Activated CD4-positive, alpha-beta T cell treated with anti-CD3 and anti-CD28 coated beads for 36 hours (primary cell): ENCODE measurements at regions of chr15 and their contacts with region 1.

Region 1: GRCh38 chr15:64809649-64810496 is 15.6 kb downstream of the PIF1 start:
- DNase-seq: peak; percentile 86
- ATAC-seq: peak; percentile 86
- H3K4me3 Mint-ChIP-seq: no peak overlapping the region
- H3K27ac Mint-ChIP-seq: no peak overlapping the region
- H3K4me1 Mint-ChIP-seq: no peaks in the 10 kb centered on the region
- H3K27me3 Mint-ChIP-seq: peaks cover 3% of the 10 kb centered on the region

Region 2: GRCh38 chr15:64478863-64479262 is 331.0 kb before region 1 on chr15:
- CTCF ChIA-PET with region 1: no interaction called
- POLR2A ChIA-PET with region 1: no interaction called
- intact Hi-C with region 1: no loop called
- DNase-seq: no peak
- ATAC-seq: no peak
- H3K4me3 Mint-ChIP-seq: no peak overlapping the region
- H3K27ac Mint-ChIP-seq: no peak overlapping the region
- H3K4me1 Mint-ChIP-seq: peaks cover 32% of the 10 kb centered on the region
- H3K27me3 Mint-ChIP-seq: no peaks in the 10 kb centered on the region

Region 3: GRCh38 chr15:64681424-64682024 is 128.3 kb before region 1 on chr15:
- CTCF ChIA-PET with region 1: interaction called, 14 read pairs
- POLR2A ChIA-PET with region 1: no interaction called
- intact Hi-C with region 1: loop called in 1 of 2 experiments (anchors 2 kb)
- DNase-seq: peak; percentile 16
- ATAC-seq: peak; percentile 60
- H3K4me3 Mint-ChIP-seq: no peak overlapping the region
- H3K27ac Mint-ChIP-seq: no peak overlapping the region
- H3K4me1 Mint-ChIP-seq: no peaks in the 10 kb centered on the region
- H3K27me3 Mint-ChIP-seq: no peaks in the 10 kb centered on the region

Region 4: GRCh38 chr15:64783796-64784195 is 26.1 kb before region 1 on chr15:
- CTCF ChIA-PET with region 1: interaction called, 18 read pairs
- POLR2A ChIA-PET with region 1: no interaction called
- intact Hi-C with region 1: no loop called
- DNase-seq: no peak
- ATAC-seq: no peak
- H3K4me3 Mint-ChIP-seq: no peak overlapping the region
- H3K27ac Mint-ChIP-seq: no peak overlapping the region
- H3K4me1 Mint-ChIP-seq: peaks cover 4% of the 10 kb centered on the region
- H3K27me3 Mint-ChIP-seq: no peaks in the 10 kb centered on the region

Region 5: GRCh38 chr15:64836023-64836536 is 26.2 kb after region 1 on chr15:
- CTCF ChIA-PET with region 1: interaction called, 11 read pairs
- POLR2A ChIA-PET with region 1: no interaction called
- intact Hi-C with region 1: no loop called
- DNase-seq: no peak
- ATAC-seq: peak; percentile 4
- H3K4me3 Mint-ChIP-seq: peak overlapping the region; percentile 56
- H3K27ac Mint-ChIP-seq: peak overlapping the region; percentile 30
- H3K4me1 Mint-ChIP-seq: peaks cover 43% of the 10 kb centered on the region
- H3K27me3 Mint-ChIP-seq: no peaks in the 10 kb centered on the region

Region 6: DNA sequence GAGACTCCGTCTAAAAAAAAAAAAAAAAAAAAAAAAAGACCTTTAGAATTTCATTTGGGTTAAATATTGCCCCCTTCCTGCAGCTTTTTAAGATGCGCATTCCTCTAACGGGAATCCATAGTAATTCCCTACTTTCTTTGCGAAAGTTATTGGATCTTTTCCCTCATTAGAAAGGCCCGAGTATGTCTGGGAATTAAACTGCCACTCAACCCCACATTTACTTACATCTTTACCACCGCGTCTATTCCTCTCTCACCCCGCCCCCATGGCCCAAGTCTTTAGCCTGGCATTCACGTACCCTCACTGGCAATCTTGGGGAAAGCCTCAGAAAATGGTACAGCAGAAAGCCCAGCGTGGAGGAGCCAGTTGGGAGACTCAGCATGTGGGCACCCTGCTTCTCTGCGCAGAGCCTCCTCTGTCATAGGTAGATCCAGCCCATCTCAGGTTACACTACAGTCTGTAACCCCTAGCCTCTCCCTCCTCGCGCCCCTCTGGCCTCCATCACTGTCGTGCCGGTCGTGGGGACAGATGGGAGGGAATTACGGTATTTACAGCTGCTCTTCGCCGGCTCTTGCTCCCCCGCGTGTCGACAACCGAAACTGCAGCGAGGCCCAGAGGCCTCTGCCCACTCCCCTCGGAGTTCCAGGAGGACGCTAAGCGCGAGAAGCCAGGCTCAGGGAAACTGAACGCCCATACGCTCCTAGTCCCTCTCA is 95.4 kb after region 1 on chr15:
- CTCF ChIA-PET with region 1: interaction called, 12 read pairs
- POLR2A ChIA-PET with region 1: no interaction called
- intact Hi-C with region 1: loop called in 1 of 2 experiments (anchors 1 kb)
- DNase-seq: peak; percentile 91
- ATAC-seq: peak; percentile 87
- H3K4me3 Mint-ChIP-seq: peak overlapping the region; percentile 67
- H3K27ac Mint-ChIP-seq: peak overlapping the region; percentile 87
- H3K4me1 Mint-ChIP-seq: peaks cover 34% of the 10 kb centered on the region
- H3K27me3 Mint-ChIP-seq: peaks cover 6% of the 10 kb centered on the region

Region 7: GRCh38 chr15:64950888-64951287 is 141.0 kb after region 1 on chr15:
- CTCF ChIA-PET with region 1: no interaction called
- POLR2A ChIA-PET with region 1: no interaction called
- intact Hi-C with region 1: no loop called
- DNase-seq: no peak
- ATAC-seq: no peak
- H3K4me3 Mint-ChIP-seq: no peak overlapping the region
- H3K27ac Mint-ChIP-seq: peak overlapping the region; percentile 1
- H3K4me1 Mint-ChIP-seq: peaks cover 1% of the 10 kb centered on the region
- H3K27me3 Mint-ChIP-seq: no peaks in the 10 kb centered on the region

Region 8: GRCh38 chr15:64961013-64961412 is 151.1 kb after region 1 on chr15:
- CTCF ChIA-PET with region 1: no interaction called
- POLR2A ChIA-PET with region 1: no interaction called
- intact Hi-C with region 1: no loop called
- DNase-seq: no peak
- ATAC-seq: no peak
- H3K4me3 Mint-ChIP-seq: no peak overlapping the region
- H3K27ac Mint-ChIP-seq: no peak overlapping the region
- H3K4me1 Mint-ChIP-seq: no peaks in the 10 kb centered on the region
- H3K27me3 Mint-ChIP-seq: no peaks in the 10 kb centered on the region